Common myeloid progenitor, CD34-positive (primary cell): ENCODE measurements at regions of chr3 and their contacts with region 1.

Region 1: GRCh38 chr3:42880601-42881451 is 5.1 kb upstream of the CYP8B1 start:
- DNase-seq: peak; percentile 86 to 93 (median 92)
- H3K4me3 ChIP-seq: peak overlapping the region; percentile 41 to 83 (median 62)
- H3K27ac ChIP-seq: no peak overlapping the region
- H3K4me1 ChIP-seq: peaks cover 4 to 20% (median 8%) of the 10 kb centered on the region in 4 experiments
- H3K27me3 ChIP-seq: peaks cover 0 to 12% (median 0%) of the 10 kb centered on the region in 5 experiments

Region 2: DNA sequence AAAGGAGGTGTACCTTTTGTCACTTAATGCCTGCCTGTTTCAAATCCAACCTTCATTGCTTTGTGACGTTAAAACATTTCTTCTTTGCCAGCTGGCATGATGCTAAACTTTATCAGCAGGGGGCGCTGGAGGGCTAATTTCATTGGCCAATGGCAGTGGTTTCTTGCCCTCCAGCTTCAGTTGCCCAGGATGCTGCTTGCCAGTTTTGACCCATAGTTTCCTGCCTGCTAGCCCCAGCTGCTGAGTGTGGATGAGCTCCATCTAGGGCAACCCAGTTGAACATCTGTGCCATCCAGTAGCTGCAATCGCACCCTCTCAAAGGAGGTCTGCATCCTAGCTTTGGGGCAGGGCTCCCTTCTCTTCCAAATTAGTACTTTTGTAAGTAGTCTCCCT is 49.5 kb before region 1 on chr3:
- CTCF ChIA-PET with region 1: interaction called, 12 read pairs
- POLR2A ChIA-PET with region 1: no interaction called
- DNase-seq: peak; percentile 79 to 88 (median 86)
- H3K4me3 ChIP-seq: peak overlapping the region in 1 of 7 experiments; percentile 1
- H3K27ac ChIP-seq: no peak overlapping the region
- H3K4me1 ChIP-seq: peaks cover 0 to 6% (median 0%) of the 10 kb centered on the region in 4 experiments
- H3K27me3 ChIP-seq: no peaks in the 10 kb centered on the region